Heart left ventricle (tissue), 16 donors: ENCODE measurements at regions of chr20 and their contacts with region 1.

Region 1: DNA sequence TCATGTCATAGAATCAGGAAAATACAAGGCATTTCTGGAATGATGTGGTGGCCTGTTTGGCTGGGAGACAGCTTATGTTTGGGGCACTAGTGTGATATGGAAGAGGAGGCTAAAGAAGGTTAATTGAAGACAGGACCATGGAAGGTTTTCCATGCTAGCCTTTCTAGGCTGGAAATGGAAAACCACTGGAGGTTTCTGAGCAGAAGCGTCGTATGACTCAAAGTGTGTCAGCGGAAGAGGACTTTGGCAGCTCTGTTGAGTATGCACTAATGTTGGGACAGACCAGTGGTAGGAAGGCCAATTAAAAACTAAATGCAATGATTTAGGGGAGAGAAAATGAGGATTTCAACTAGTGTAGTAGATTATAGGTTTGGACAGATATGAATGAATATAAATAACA is 413.1 kb downstream of the PLCB1 start:
- DNase-seq: no peak
- ATAC-seq: peak in 1 of 4 donors; percentile 75
- H3K4me3 ChIP-seq: no peak overlapping the region
- H3K27ac ChIP-seq: no peak overlapping the region
- H3K4me1 ChIP-seq: peaks cover 0 to 34% (median 17%) of the 10 kb centered on the region in 12 donors
- H3K27me3 ChIP-seq: no peaks in the 10 kb centered on the region
- CTCF ChIP-seq: no peak
- POLR2A ChIP-seq: no peak

Region 2: GRCh38 chr20:8527998-8528723 is 17.1 kb before region 1 on chr20:
- intact Hi-C with region 1: no loop called
- DNase-seq: no peak
- ATAC-seq: no peak
- H3K4me3 ChIP-seq: no peak overlapping the region
- H3K27ac ChIP-seq: no peak overlapping the region
- H3K4me1 ChIP-seq: peaks cover 0 to 11% (median 0%) of the 10 kb centered on the region in 12 donors
- H3K27me3 ChIP-seq: no peaks in the 10 kb centered on the region
- CTCF ChIP-seq: no peak
- POLR2A ChIP-seq: no peak

Region 3: DNA sequence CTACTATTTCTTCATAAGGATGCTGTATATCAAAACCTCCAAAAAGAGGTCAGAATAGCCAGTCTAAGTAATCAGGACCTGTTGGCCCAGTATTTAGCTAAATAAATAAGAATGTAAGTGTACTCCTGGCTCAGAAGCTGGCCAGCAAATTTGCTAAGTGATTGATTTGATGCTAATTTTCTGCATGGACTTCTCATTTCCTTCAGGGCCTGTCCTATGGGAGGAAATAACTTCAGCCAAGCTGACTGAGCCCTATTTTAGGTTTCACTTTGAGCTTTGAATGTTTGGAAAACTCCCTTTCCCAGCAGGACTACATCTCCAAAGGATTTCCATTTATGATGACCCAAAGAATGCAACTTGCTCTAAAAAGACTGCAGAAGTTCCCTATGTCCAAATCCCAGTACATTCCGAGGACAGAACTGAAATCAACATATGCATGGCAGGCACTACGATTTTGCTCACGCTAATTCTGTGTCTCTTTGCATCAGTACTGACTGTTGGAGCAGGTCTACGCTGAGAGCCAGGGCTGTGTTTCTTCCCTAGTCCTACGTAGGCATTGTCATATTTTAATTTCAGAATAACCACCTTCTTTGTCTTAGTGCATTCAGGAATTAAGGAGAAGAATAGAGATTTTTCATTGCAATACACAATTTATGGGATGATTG is 82.3 kb after region 1 on chr20:
- intact Hi-C with region 1: loop called in 1 of 10 experiments (anchors 10 kb)
- DNase-seq: peak in 1 of 5 donors; percentile 13
- ATAC-seq: peak in 3 of 4 donors; percentile 20 to 83 (median 50)
- H3K4me3 ChIP-seq: peak overlapping the region in 9 of 12 donors; percentile 25 to 44 (median 39)
- H3K27ac ChIP-seq: peak overlapping the region; percentile 31 to 73 (median 54)
- H3K4me1 ChIP-seq: peaks cover 0 to 32% (median 9%) of the 10 kb centered on the region in 12 donors
- H3K27me3 ChIP-seq: no peaks in the 10 kb centered on the region
- CTCF ChIP-seq: no peak
- POLR2A ChIP-seq: no peak

Region 4: DNA sequence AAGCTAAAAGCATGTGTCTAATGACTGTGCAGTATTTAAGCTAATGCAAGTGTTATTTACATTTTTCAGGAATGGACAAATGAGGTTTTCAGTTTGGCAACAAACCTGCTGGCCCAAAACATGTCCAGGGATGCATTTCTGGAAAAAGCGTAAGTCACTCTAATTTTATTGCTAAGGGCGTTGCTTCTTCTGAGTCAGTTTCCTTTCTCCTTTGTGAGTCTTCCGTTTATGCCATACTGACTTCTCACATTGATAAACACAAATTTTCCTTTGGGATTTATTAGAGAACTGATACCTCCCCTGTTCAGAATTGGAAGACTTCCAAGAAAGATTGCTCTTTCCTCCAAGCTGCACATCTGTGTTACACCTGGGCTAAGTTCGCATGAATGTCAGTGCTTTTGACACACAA is 100.8 kb after region 1 on chr20:
- intact Hi-C with region 1: loop called in 3 of 10 experiments (anchors 5 to 10 kb)
- DNase-seq: no peak
- ATAC-seq: peak in 3 of 4 donors; percentile 34 to 68 (median 53)
- H3K4me3 ChIP-seq: no peak overlapping the region
- H3K27ac ChIP-seq: peak overlapping the region in 11 of 12 donors; percentile 39 to 77 (median 65)
- H3K4me1 ChIP-seq: peaks cover 0 to 44% (median 29%) of the 10 kb centered on the region in 12 donors
- H3K27me3 ChIP-seq: no peaks in the 10 kb centered on the region
- CTCF ChIP-seq: no peak
- POLR2A ChIP-seq: no peak

Region 5: GRCh38 chr20:8656335-8656734 is 111.1 kb after region 1 on chr20:
- intact Hi-C with region 1: loop called in 2 of 10 experiments (anchors 10 kb)
- DNase-seq: peak in 2 of 5 donors; percentile 33 to 56
- ATAC-seq: peak in 3 of 4 donors; percentile 10 to 89 (median 43)
- H3K4me3 ChIP-seq: no peak overlapping the region
- H3K27ac ChIP-seq: peak overlapping the region in 5 of 12 donors; percentile 14 to 67 (median 56)
- H3K4me1 ChIP-seq: peaks cover 0 to 40% (median 10%) of the 10 kb centered on the region in 12 donors
- H3K27me3 ChIP-seq: no peaks in the 10 kb centered on the region
- CTCF ChIP-seq: no peak
- POLR2A ChIP-seq: no peak

Region 6: GRCh38 chr20:8664778-8665177 is 119.6 kb after region 1 on chr20:
- intact Hi-C with region 1: loop called in 2 of 10 experiments (anchors 10 kb)
- DNase-seq: peak in 1 of 5 donors; percentile 15
- ATAC-seq: peak in 3 of 4 donors; percentile 69 to 80 (median 80)
- H3K4me3 ChIP-seq: no peak overlapping the region
- H3K27ac ChIP-seq: peak overlapping the region in 1 of 12 donors; percentile 19
- H3K4me1 ChIP-seq: peaks cover 2 to 34% (median 21%) of the 10 kb centered on the region in 12 donors
- H3K27me3 ChIP-seq: no peaks in the 10 kb centered on the region
- CTCF ChIP-seq: peak in 11 of 12 donors; percentile 6 to 55 (median 29)
- POLR2A ChIP-seq: no peak

Region 7: GRCh38 chr20:8722276-8722928 is 177.2 kb after region 1 on chr20:
- intact Hi-C with region 1: loop called in 1 of 10 experiments (anchors 10 kb)
- DNase-seq: peak in 2 of 5 donors; percentile 26 to 27
- ATAC-seq: peak; percentile 53 to 86 (median 81)
- H3K4me3 ChIP-seq: no peak overlapping the region
- H3K27ac ChIP-seq: no peak overlapping the region
- H3K4me1 ChIP-seq: peaks cover 0 to 2% (median 0%) of the 10 kb centered on the region in 12 donors
- H3K27me3 ChIP-seq: no peaks in the 10 kb centered on the region
- CTCF ChIP-seq: peak; percentile 64 to 87 (median 80)
- POLR2A ChIP-seq: no peak